Heart left ventricle (tissue), 16 donors: ENCODE measurements at regions of chr2 and their contacts with region 1.

Region 1: GRCh38 chr2:159168707-159169106 is 117.8 kb downstream of the WDSUB1 start:
- DNase-seq: no peak
- ATAC-seq: no peak
- H3K4me3 ChIP-seq: no peak overlapping the region
- H3K27ac ChIP-seq: peak overlapping the region in 2 of 12 donors; percentile 11 to 19
- H3K4me1 ChIP-seq: peaks cover 0 to 38% (median 18%) of the 10 kb centered on the region in 12 donors
- H3K27me3 ChIP-seq: no peaks in the 10 kb centered on the region
- CTCF ChIP-seq: peak in 5 of 12 donors; percentile 18 to 41 (median 35)
- POLR2A ChIP-seq: no peak

Region 2: GRCh38 chr2:159124931-159125467 is 43.7 kb before region 1 on chr2:
- intact Hi-C with region 1: loop called in 1 of 10 experiments (anchors 5 kb)
- DNase-seq: no peak
- ATAC-seq: no peak
- H3K4me3 ChIP-seq: no peak overlapping the region
- H3K27ac ChIP-seq: peak overlapping the region in 11 of 12 donors; percentile 23 to 94 (median 65)
- H3K4me1 ChIP-seq: peaks cover 4 to 85% (median 48%) of the 10 kb centered on the region in 12 donors
- H3K27me3 ChIP-seq: no peaks in the 10 kb centered on the region
- CTCF ChIP-seq: no peak
- POLR2A ChIP-seq: no peak

Region 3: DNA sequence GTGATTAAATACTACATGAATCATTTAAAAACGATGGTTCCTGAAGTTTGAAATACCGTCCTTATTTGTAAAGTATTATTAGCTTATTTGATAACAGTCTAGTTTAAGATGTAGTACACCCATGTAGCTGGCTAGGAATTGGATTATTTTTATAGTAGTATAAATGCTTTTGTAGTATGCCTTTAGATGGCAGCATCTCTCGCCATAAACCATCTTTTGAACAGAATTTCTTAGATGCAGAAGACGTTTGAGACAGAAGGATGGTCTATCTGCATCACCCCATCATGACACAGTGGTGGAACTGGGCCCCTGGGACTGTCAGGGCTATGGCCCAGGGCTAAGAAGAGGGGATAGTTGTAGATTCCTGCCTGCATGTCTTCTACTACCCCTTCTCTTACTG is 34.9 kb before region 1 on chr2:
- intact Hi-C with region 1: loop called in 3 of 10 experiments (anchors 1 to 2 kb)
- DNase-seq: no peak
- ATAC-seq: no peak
- H3K4me3 ChIP-seq: no peak overlapping the region
- H3K27ac ChIP-seq: peak overlapping the region in 11 of 12 donors; percentile 75 to 94 (median 83)
- H3K4me1 ChIP-seq: peaks cover 4 to 96% (median 71%) of the 10 kb centered on the region in 12 donors
- H3K27me3 ChIP-seq: no peaks in the 10 kb centered on the region
- CTCF ChIP-seq: peak in 5 of 12 donors; percentile 21 to 42 (median 39)
- POLR2A ChIP-seq: no peak